Motor neuron (in vitro differentiated cells): ENCODE measurements at regions of chr5 and their contacts with region 1.

Region 1: DNA sequence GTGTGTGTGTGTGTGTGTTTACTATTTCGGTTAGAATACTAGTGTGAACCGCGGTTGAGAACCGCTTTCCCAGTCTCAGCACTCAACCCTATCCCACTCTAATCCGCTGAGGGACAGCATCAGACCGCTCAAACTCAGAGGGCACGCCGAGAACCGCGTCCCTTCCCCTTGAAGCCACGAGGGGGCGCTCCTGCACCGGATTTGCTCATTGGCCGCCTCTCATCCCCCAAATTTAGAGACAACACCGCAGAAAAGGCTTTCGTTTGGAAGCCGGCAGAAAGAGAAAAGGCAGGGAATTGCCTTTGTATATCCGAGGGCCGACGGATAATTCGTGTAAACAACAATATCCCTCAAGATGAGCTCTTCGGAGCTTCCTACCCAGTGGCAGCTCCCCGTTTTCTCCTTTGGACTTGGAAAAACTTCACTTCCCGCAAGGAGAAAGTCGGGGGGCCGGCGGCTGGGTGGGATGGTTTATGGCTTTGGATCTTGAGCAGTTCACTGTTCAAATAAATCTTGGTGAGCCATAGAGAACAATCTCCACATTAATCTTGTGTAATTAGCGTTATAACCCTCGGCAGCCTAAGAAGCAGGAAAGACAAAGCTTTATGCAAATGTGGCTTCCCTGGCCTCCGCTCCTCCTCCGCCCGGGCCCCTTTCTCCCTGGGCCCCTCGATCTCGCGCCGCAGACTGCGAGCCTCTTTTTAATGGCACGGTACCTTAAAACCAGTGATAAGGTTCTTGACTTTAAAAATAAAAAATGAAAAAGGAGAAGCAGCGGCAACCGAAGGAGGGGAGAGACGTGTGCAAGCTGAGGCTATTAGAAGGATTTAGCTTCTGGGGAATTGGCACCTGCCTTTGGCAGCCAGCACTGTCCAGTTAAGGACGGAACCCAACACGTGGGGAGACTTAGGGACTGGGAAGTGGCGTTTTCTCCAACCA is 296.8 kb downstream of the PARP8 start:
- ATAC-seq: peak; percentile 87 to 94 (median 90)
- H3K4me3 ChIP-seq: peak overlapping the region; percentile 24 to 38 (median 32)
- H3K27ac ChIP-seq: peak overlapping the region in 1 of 2 donors; percentile 20
- H3K4me1 ChIP-seq: peaks cover 6 to 12% of the 10 kb centered on the region in 2 donors

Region 2: GRCh38 chr5:50786073-50786472 is 177.1 kb before region 1 on chr5:
- in situ Hi-C with region 1: no loop called
- ATAC-seq: no peak
- H3K4me3 ChIP-seq: no peak overlapping the region
- H3K27ac ChIP-seq: no peak overlapping the region
- H3K4me1 ChIP-seq: no peaks in the 10 kb centered on the region

Region 3: GRCh38 chr5:51373880-51374523 is 410.8 kb after region 1 on chr5:
- in situ Hi-C with region 1: loop called in 6 of 9 experiments (anchors 25 kb)
- ATAC-seq: peak in 6 of 8 experiments; percentile 29 to 87 (median 54)
- H3K4me3 ChIP-seq: no peak overlapping the region
- H3K27ac ChIP-seq: no peak overlapping the region
- H3K4me1 ChIP-seq: peaks cover 10 to 15% of the 10 kb centered on the region in 2 donors

Region 4: DNA sequence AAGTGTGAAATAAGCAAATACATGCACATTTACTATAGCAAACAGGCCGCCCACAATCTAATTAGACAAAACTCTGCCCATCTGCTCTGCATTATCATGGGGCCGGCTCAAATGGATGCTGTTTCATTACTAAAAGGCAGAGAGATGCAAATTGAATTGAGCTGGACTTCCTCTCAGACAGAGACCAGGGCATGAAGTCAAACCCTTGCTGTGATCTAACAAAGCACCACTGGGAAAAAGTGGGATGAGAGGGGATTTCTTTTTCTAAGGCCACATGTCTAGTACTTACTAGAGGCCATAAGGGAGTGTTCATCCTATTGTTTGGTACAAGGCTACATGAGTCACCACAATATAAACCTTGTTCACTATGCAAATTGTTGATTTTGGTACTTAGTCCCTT is 1034.7 kb after region 1 on chr5:
- in situ Hi-C with region 1: loop called in 6 of 9 experiments (anchors 10 to 25 kb)
- ATAC-seq: peak; percentile 33 to 99 (median 84)
- H3K4me3 ChIP-seq: no peak overlapping the region
- H3K27ac ChIP-seq: no peak overlapping the region
- H3K4me1 ChIP-seq: peaks cover 2 to 5% of the 10 kb centered on the region in 2 donors

Region 5: DNA sequence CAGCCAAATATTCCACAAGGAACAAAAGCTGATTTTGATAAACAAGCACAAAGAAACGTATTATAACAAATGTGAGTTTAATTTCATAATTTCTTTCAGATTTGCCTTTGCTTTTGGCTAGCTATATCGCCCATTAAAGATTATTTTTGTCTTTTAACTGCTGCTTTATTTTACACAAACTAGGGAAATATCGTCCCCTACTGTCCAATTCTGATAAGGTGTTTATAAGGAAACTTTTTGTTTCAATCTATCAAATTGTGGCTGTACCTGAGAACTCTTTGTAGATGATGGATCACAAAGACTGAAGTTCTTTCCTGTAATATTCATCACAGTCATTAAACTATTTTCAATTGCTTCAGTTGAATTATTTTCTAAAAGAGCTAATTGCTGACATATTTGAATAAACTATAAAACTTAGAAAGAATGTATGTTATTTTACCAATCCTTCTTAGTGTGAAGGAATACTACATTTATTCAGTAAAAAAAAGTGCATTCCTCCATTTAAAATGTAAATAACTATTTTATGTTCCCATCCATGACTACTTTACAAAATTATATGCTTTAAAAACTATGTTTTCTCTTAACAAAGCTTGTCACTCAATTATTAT is 1393.2 kb after region 1 on chr5:
- in situ Hi-C with region 1: loop called in 1 of 9 experiments (anchors 25 kb)
- ATAC-seq: no peak
- H3K4me3 ChIP-seq: no peak overlapping the region
- H3K27ac ChIP-seq: no peak overlapping the region
- H3K4me1 ChIP-seq: no peaks in the 10 kb centered on the region

Region 6: GRCh38 chr5:52657247-52657645 is 1694.0 kb after region 1 on chr5:
- in situ Hi-C with region 1: loop called in 3 of 9 experiments (anchors 25 kb)
- ATAC-seq: peak in 3 of 8 experiments; percentile 23 to 46 (median 46)
- H3K4me3 ChIP-seq: no peak overlapping the region
- H3K27ac ChIP-seq: no peak overlapping the region
- H3K4me1 ChIP-seq: peaks cover 0 to 2% of the 10 kb centered on the region in 2 donors